OCI-LY7 (cell line): ENCODE measurements at regions of chr3 and their contacts with region 1.

Region 1: GRCh38 chr3:30577788-30578187 is 28.6 kb upstream of the TGFBR2 start:
- DNase-seq: no peak
- H3K4me3 ChIP-seq: no peak overlapping the region
- H3K27ac ChIP-seq: no peak overlapping the region
- H3K4me1 ChIP-seq: no peaks in the 10 kb centered on the region
- CTCF ChIP-seq: no peak

Region 2: DNA sequence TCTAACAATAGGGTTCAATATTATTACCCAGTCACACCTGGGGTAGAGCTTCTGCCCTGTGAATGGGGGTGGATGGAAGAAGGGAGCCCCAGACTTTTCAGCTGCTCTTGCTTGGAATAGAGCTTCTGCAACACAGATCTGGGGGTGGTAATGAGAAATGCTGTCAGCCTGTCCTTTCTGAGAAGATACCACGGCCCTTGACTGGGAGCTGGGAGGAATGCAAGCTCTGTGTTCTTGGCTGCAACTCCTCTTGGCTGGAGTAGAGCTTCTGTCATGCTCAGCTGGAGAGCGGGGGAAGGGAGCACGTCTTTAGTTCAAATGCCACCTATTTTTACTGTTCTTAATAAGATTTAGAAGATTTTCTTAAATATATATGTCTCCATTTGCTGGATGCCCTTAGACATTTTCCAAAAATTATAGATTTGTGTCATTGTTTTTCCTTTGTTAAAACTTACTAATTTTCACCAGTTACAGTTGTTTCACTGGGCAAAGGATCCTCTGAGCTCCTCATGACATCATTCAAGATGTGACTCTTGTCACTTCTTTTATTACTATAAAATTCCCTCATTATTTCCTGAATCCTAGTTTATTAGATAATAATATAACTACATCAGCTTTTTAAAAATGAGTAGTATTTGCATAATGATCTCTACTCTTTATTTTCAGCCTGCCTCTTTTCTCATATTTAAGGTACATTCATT is 151.3 kb before region 1 on chr3:
- CTCF ChIA-PET with region 1: no interaction called
- POLR2A ChIA-PET with region 1: no interaction called
- intact Hi-C with region 1: no loop called
- DNase-seq: no peak
- H3K4me3 ChIP-seq: no peak overlapping the region
- H3K27ac ChIP-seq: no peak overlapping the region
- H3K4me1 ChIP-seq: no peaks in the 10 kb centered on the region
- CTCF ChIP-seq: no peak

Region 3: DNA sequence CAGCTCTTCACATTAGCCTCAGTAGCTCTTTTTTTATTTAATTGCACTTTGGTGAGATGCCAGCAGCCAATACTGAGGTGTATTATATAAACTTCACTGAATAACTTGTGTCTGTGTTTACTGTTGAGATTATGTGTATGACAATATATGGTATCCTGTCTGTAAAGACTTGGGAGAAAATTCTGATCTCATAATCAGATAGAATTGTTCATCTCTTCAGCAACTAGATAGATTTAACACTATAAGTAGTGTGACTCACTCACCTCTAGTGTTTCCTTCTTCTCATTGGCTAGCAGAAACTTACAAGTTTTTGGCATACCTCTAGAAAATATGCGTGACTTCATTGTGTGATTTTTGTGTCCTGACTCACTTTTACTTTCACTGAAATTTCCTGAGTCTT is 39.0 kb before region 1 on chr3:
- CTCF ChIA-PET with region 1: no interaction called
- POLR2A ChIA-PET with region 1: no interaction called
- intact Hi-C with region 1: no loop called
- DNase-seq: no peak
- H3K4me3 ChIP-seq: no peak overlapping the region
- H3K27ac ChIP-seq: no peak overlapping the region
- H3K4me1 ChIP-seq: no peaks in the 10 kb centered on the region
- CTCF ChIP-seq: no peak

Region 4: GRCh38 chr3:30620402-30621360 is 42.9 kb after region 1 on chr3:
- CTCF ChIA-PET with region 1: no interaction called
- POLR2A ChIA-PET with region 1: no interaction called
- intact Hi-C with region 1: loop called (anchors 1 kb)
- DNase-seq: no peak
- H3K4me3 ChIP-seq: no peak overlapping the region
- H3K27ac ChIP-seq: peak overlapping the region; percentile 25
- H3K4me1 ChIP-seq: peaks cover 98% of the 10 kb centered on the region
- CTCF ChIP-seq: no peak

Region 5: DNA sequence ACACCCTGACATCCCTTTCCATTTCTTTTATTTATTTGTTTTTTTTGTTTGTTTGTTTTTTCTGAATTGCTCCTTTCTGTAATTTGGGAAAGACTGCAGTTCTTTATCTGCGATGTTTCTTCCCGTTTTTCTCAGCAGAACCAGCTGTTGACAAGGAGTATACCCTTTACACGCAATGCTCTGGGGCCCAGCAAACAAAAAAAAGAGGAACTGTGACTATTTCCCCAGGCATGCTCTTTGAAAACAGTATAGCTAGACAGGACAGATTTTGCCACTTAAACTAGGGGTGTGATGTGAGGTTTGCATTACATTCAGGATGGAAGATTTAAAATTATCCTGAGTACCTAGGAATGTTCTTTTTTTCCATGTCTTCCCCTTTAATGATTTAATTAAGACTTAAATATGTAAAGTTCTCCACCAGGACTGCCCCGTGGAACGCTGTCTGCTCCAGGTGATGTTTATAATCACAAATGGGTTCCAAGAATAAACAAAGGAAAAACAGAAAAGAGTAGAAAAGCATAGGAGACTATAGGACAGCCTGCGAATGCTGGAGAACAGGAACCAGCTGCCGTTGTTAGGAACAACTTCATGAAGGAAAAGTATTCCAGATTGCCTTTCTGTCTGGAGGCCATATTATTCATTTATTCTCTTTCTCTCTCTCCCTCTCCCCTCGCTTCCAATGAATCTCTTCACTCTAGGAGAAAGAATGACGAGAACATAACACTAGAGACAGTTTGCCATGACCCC is 72.0 kb after region 1 on chr3:
- CTCF ChIA-PET with region 1: no interaction called
- POLR2A ChIA-PET with region 1: no interaction called
- intact Hi-C with region 1: no loop called
- DNase-seq: peak; percentile 77
- H3K4me3 ChIP-seq: peak overlapping the region; percentile 42
- H3K27ac ChIP-seq: peak overlapping the region; percentile 72
- H3K4me1 ChIP-seq: peaks cover 81% of the 10 kb centered on the region
- CTCF ChIP-seq: no peak

Region 6: DNA sequence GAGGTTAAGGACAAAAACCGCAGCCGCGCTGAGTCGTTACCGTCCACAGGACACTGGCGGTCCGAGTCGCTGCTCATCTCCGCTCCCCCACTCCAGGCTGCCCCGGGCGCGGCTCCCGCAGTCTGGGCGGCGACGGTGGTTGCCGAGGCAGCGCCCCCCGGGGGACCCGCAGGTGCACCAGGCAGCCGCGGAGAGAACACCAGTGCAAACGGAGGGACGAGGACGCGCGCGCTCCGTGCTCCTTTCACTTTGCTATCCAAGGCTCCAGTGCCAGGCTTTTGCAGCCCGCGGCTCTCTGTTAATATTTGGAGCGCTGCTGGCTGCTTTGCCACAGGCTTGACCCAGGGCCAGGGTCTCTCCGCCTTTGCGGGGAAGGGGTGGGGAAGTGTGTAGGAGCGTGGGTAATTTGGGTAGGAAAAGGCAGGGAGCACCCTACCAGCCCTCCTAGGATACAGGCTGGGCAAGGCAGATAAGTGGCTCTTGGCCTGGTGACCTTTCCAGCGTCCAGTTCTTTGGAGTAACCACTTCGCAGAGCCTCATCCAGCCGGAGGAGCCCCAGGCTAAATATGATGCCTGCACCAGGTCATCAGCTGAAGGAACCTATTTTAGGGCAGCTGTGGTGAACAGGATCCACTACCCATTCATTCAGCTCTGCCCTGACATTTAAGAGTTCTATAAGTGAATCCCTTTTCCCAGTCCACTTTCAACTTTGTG is 316.9 kb after region 1 on chr3 and contains the start of gene GADL1:
- CTCF ChIA-PET with region 1: no interaction called
- POLR2A ChIA-PET with region 1: no interaction called
- intact Hi-C with region 1: no loop called
- DNase-seq: no peak
- H3K4me3 ChIP-seq: no peak within 1 kb of the TSS
- H3K27ac ChIP-seq: no peak within 1 kb of the TSS
- H3K4me1 ChIP-seq: no peaks in the 10 kb centered on the region
- CTCF ChIP-seq: no peak
- total RNA-seq, gene GADL1: not detected in 2 replicates